Left colon (tissue), 2 donors: ENCODE measurements at regions of chr7 and their contacts with region 1.

Region 1: DNA sequence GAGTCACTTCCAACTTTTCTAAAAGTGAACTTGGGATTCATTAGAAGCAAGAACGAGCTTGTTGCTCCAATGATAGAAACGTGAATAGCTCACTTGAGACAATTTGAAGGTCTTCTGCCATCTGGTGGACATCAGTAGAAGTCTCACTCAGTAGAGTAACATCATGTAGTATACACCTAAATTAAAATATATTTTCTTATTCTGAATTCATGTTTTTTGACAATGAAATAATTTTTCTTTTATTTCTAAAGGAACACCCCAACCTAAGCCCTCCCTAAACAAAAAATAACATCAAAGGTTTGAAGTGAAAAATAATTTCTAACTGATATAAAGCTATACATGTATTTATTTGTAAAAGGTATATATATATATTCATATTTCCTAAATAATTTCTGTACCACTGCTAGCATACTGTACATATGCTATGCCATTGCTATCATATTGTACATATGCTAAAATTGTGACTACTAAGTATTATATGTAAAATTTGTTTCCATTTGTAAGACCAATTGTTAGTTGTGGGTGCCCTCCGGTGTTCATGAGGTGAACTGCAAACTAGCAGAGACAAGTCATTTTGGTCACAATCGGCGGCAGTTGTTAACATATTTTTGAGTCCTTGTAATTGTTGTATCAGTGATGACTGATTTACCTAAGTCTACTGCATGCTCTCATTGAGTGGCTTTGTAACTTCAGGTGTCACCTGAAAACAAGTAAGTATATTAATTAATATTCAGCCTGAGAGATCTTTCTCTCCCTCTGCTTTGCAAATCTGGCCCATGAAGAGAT is 121.9 kb downstream of the PTPRZ1 start:
- DNase-seq: peak in 1 of 2 donors; percentile 60
- ATAC-seq: peak; percentile 94

Region 2: GRCh38 chr7:121547544-121548092 is 447.2 kb before region 1 on chr7:
- intact Hi-C with region 1: loop called in 1 of 2 experiments (anchors 5 kb)
- DNase-seq: no peak
- ATAC-seq: peak; percentile 93

Region 3: GRCh38 chr7:121605317-121605680 is 389.5 kb before region 1 on chr7:
- intact Hi-C with region 1: loop called in 1 of 2 experiments (anchors 5 kb)
- DNase-seq: no peak
- ATAC-seq: peak; percentile 67